Heart left ventricle (tissue), 16 donors: ENCODE measurements at regions of chr1 and their contacts with region 1.

Region 1: DNA sequence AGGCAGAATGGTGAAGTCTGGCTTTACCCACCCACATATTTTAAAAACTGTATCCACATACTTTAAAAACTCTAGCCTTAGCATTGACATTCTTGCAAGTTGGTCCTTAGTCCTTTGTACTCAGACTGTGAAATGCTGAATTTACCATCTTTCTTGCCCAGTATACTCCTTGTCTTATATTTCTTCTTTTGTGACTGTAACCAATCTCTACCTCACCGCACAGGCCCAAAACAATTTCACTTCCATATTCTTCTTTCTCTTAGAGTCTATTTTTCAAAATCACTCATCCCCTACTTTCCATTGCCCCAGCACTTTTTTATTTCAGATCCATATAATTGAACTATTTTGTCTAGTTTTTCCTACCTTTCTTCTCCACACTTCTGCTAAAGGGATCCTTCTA is 892.4 kb upstream of the B3GALT2 start:
- DNase-seq: no peak
- ATAC-seq: no peak
- H3K4me3 ChIP-seq: no peak overlapping the region
- H3K27ac ChIP-seq: no peak overlapping the region
- H3K4me1 ChIP-seq: no peaks in the 10 kb centered on the region
- H3K27me3 ChIP-seq: no peaks in the 10 kb centered on the region
- CTCF ChIP-seq: no peak
- POLR2A ChIP-seq: no peak

Region 2: DNA sequence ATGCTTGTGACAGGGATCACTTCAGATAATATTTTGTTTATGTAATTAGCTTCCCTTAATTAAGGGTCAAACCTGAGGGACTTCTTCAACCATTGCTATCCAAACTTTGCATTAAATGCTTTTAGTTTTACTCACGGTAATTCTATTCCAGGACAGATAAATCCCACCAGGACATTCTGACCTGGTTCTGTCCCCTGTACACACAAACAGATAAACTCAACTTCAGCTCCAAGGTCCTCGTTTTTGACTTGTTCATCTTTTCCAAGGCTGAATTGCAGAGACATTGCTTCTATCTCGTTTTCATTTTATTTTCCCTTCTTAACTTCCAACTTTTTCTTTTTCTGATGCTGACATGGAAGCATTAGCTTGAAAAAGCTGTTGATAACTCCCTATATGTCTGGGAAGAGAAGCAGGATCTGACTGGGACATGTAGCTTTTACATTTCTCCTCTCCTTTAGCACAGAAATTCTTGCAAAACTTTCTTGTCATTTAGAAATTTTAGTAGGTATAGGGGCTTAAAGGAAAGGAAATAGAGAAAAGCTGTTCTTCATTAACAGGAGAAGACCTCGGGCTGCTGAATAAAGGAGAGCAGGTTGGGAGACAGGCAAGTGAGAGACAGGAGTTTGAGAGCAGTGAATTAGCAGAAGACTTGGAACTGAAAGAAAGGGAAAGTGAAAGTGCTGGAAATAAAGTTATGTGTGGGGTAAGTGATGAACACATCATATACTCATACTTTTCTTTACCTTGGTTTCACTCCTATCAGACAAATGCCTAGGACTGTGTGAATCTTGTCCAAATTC is 660.6 kb before region 1 on chr1:
- intact Hi-C with region 1: loop called in 1 of 10 experiments (anchors 10 kb)
- DNase-seq: no peak
- ATAC-seq: peak in 3 of 4 donors; percentile 59 to 75 (median 68)
- H3K4me3 ChIP-seq: peak overlapping the region in 11 of 12 donors; percentile 6 to 61 (median 40)
- H3K27ac ChIP-seq: peak overlapping the region in 9 of 12 donors; percentile 9 to 65 (median 43)
- H3K4me1 ChIP-seq: peaks cover 0 to 19% (median 6%) of the 10 kb centered on the region in 12 donors
- H3K27me3 ChIP-seq: no peaks in the 10 kb centered on the region
- CTCF ChIP-seq: no peak
- POLR2A ChIP-seq: no peak

Region 3: DNA sequence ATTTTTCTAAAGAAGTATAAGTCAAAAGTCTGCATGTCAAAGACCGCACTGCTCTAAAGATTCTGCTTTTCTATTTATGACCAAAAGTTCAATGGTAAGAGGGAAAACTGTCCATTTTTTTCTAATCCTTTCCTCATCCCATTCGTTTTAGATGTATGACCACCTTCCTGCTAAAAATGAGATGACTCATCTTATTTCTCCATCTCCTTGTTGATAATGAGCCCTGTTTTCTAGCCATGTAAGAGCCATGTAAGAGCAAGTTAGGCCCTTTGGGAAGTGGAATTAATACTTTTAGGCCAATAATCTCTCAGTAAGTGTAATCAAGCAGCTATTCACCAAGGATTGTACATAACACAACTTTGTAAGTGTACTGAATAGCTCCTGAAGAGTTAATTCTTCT is 416.7 kb before region 1 on chr1:
- intact Hi-C with region 1: loop called in 1 of 10 experiments (anchors 10 kb)
- DNase-seq: no peak
- ATAC-seq: no peak
- H3K4me3 ChIP-seq: no peak overlapping the region
- H3K27ac ChIP-seq: no peak overlapping the region
- H3K4me1 ChIP-seq: peaks cover 0 to 17% (median 0%) of the 10 kb centered on the region in 12 donors
- H3K27me3 ChIP-seq: no peaks in the 10 kb centered on the region
- CTCF ChIP-seq: no peak
- POLR2A ChIP-seq: no peak